Activated CD4-positive, alpha-beta T cell treated with anti-CD3 and anti-CD28 coated beads for 36 hours (primary cell): ENCODE measurements at regions of chr3 and their contacts with region 1.

Region 1: DNA sequence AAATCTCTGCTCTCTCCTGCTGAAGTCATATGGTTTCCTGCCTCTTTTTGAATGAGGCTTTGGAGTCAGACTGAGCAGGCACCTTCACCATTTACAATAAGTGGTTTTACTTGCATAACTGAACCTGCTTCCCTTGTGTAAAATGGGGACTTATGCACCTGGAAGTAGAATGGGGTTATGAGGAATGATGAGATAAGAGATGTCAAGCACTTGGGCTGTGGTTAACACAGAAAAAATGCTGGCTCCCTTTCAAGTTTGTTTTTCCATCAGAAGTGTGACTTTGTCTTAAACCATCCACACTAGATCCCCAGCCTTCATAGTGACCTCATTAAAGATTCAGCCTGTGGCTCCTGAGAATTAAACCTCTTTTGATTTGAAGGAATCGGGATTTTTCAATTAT is 5.2 kb downstream of the EXOSC7 start:
- DNase-seq: no peak
- ATAC-seq: peak; percentile 47
- H3K4me3 Mint-ChIP-seq: no peak overlapping the region
- H3K27ac Mint-ChIP-seq: peak overlapping the region; percentile 58
- H3K4me1 Mint-ChIP-seq: peaks cover 76% of the 10 kb centered on the region
- H3K27me3 Mint-ChIP-seq: no peaks in the 10 kb centered on the region

Region 2: GRCh38 chr3:44685128-44685800 is 296.0 kb before region 1 on chr3:
- CTCF ChIA-PET with region 1: no interaction called
- POLR2A ChIA-PET with region 1: no interaction called
- intact Hi-C with region 1: no loop called
- DNase-seq: peak; percentile 77
- ATAC-seq: peak; percentile 92
- H3K4me3 Mint-ChIP-seq: peak overlapping the region; percentile 73
- H3K27ac Mint-ChIP-seq: peak overlapping the region; percentile 29
- H3K4me1 Mint-ChIP-seq: peaks cover 11% of the 10 kb centered on the region
- H3K27me3 Mint-ChIP-seq: peaks cover 23% of the 10 kb centered on the region

Region 3: GRCh38 chr3:44803298-44803697 is 177.9 kb before region 1 on chr3:
- CTCF ChIA-PET with region 1: no interaction called
- POLR2A ChIA-PET with region 1: no interaction called
- intact Hi-C with region 1: no loop called
- DNase-seq: no peak
- ATAC-seq: no peak
- H3K4me3 Mint-ChIP-seq: no peak overlapping the region
- H3K27ac Mint-ChIP-seq: no peak overlapping the region
- H3K4me1 Mint-ChIP-seq: no peaks in the 10 kb centered on the region
- H3K27me3 Mint-ChIP-seq: no peaks in the 10 kb centered on the region

Region 4: GRCh38 chr3:44992555-44993470 is 11.6 kb after region 1 on chr3:
- CTCF ChIA-PET with region 1: interaction called, 34 read pairs
- POLR2A ChIA-PET with region 1: interaction called, 4 read pairs
- intact Hi-C with region 1: loop called in 1 of 2 experiments (anchors 1 kb)
- DNase-seq: peak; percentile 51
- ATAC-seq: no peak
- H3K4me3 Mint-ChIP-seq: no peak overlapping the region
- H3K27ac Mint-ChIP-seq: no peak overlapping the region
- H3K4me1 Mint-ChIP-seq: peaks cover 57% of the 10 kb centered on the region
- H3K27me3 Mint-ChIP-seq: no peaks in the 10 kb centered on the region

Region 5: DNA sequence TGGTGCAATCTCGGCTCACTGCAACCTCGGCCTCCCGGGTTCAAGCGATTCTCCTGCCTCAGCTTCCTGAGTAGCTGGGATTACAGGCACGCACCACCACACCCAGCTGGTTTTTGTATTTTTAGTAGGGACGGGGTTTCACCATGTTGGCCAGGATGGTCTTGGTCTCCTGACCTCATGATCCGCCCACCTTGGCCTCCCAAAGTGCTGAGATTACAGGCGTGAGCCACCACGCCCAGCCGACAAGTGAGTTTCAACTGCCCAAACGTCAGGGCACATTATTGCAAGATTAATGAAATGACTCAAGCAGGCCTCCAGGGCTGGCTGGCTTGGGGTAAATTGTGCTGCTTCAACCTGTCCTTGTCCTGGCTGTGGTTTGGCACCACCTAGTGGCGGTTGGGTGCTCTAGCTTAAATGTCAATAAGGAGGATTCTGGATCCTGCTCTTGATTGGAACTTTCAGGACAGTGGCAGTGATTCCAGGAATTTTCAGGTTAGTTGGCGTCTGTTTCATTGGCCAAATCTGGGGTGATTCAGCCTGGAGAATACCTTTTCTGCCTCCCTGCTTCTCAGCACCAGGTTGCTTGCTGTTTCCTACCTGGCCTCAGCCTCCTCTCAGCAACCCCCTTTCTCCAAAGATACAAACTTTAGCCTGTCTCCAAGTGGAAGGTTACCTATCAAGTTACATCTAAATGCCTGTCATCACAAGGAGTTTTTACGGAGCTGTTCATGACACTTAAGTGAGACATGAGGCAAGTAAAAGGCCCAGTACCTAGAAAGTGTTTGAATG is 675.5 kb after region 1 on chr3:
- CTCF ChIA-PET with region 1: no interaction called
- POLR2A ChIA-PET with region 1: no interaction called
- intact Hi-C with region 1: no loop called
- DNase-seq: peak; percentile 94
- ATAC-seq: peak; percentile 93
- H3K4me3 Mint-ChIP-seq: no peak overlapping the region
- H3K27ac Mint-ChIP-seq: no peak overlapping the region
- H3K4me1 Mint-ChIP-seq: peaks cover 16% of the 10 kb centered on the region
- H3K27me3 Mint-ChIP-seq: no peaks in the 10 kb centered on the region